Vagina (tissue), 2 donors: ENCODE measurements at regions of chr1 and their contacts with region 1.

Region 1: GRCh38 chr1:16374266-16374665 is 7.2 kb downstream of the SZRD1 start:
- DNase-seq: no peak
- H3K4me3 ChIP-seq: no peak overlapping the region
- H3K27ac ChIP-seq: no peak overlapping the region
- H3K4me1 ChIP-seq: peaks cover 97% of the 10 kb centered on the region
- H3K27me3 ChIP-seq: no peaks in the 10 kb centered on the region
- CTCF ChIP-seq: no peak
- POLR2A ChIP-seq: no peak

Region 2: GRCh38 chr1:16191916-16192546 is 182.2 kb before region 1 on chr1:
- intact Hi-C with region 1: no loop called
- DNase-seq: no peak
- H3K4me3 ChIP-seq: no peak overlapping the region
- H3K27ac ChIP-seq: no peak overlapping the region
- H3K4me1 ChIP-seq: peaks cover 42% of the 10 kb centered on the region
- H3K27me3 ChIP-seq: no peaks in the 10 kb centered on the region
- CTCF ChIP-seq: no peak
- POLR2A ChIP-seq: no peak

Region 3: GRCh38 chr1:16243936-16244649 is 130.2 kb before region 1 on chr1:
- intact Hi-C with region 1: no loop called
- DNase-seq: peak in 1 of 2 donors; percentile 87
- H3K4me3 ChIP-seq: no peak overlapping the region
- H3K27ac ChIP-seq: peak overlapping the region; percentile 69
- H3K4me1 ChIP-seq: peaks cover 34% of the 10 kb centered on the region
- H3K27me3 ChIP-seq: no peaks in the 10 kb centered on the region
- CTCF ChIP-seq: peak; percentile 73 to 91 (median 81)
- POLR2A ChIP-seq: no peak

Region 4: DNA sequence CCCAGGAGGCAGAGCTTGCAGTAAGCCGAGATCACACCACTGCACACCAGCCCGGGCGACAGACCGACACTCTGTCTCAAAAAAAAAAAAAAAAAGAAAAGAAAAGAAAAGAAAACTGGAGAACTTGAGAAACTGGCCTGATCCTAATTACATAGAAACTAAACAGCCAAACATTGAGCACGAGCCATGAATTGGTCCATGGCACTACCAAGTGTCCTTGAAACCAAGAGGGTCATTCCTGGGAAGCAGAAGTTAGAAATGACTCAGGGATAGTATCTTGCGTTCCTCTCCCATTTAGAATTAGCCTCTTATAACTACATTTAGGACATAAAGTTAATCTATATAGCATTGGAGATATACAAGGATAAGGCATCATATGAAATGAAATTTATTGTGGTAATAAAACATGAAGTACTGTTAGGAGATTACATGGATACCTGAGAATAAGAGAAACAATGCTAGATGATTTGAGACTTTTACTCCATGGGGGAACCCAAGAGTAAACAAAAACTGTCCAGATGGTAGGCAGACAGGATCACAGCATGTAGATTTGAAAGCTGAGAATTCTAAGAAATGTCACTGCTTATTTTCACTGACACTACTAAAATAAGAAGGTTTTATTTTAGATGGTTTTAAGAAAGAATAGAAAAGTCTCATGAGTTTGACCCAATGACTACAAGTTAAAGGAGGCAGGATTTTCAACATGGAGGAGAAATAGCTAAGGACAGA is 97.8 kb before region 1 on chr1:
- intact Hi-C with region 1: no loop called
- DNase-seq: no peak
- H3K4me3 ChIP-seq: no peak overlapping the region
- H3K27ac ChIP-seq: no peak overlapping the region
- H3K4me1 ChIP-seq: peaks cover 6% of the 10 kb centered on the region
- H3K27me3 ChIP-seq: no peaks in the 10 kb centered on the region
- CTCF ChIP-seq: no peak
- POLR2A ChIP-seq: no peak

Region 5: DNA sequence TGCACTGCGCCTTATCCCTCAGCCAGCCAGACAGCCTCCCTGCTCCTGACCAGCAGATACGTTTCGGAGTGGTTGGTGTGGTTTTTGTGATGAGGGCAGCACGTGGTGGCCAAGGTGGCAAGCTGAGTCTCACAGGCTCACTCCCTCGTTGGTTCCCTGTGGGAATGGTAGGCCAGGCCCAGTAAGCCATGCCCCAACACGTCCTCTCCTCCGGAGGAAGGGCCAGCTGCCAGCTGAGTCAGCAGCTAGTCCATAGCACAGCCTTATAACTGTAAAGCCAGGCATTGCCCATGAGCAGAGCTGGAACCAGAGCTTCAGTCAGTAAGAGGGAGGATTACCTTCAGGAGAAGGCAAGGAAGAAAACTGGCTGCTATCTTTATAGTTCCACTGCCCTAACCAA is 22.3 kb after region 1 on chr1:
- intact Hi-C with region 1: no loop called
- DNase-seq: no peak
- H3K4me3 ChIP-seq: no peak overlapping the region
- H3K27ac ChIP-seq: no peak overlapping the region
- H3K4me1 ChIP-seq: peaks cover 38% of the 10 kb centered on the region
- H3K27me3 ChIP-seq: no peaks in the 10 kb centered on the region
- CTCF ChIP-seq: no peak
- POLR2A ChIP-seq: no peak

Region 6: GRCh38 chr1:16409536-16410152 is 35.4 kb after region 1 on chr1:
- intact Hi-C with region 1: loop called (anchors 1 kb)
- DNase-seq: no peak
- H3K4me3 ChIP-seq: no peak overlapping the region
- H3K27ac ChIP-seq: no peak overlapping the region
- H3K4me1 ChIP-seq: no peaks in the 10 kb centered on the region
- H3K27me3 ChIP-seq: no peaks in the 10 kb centered on the region
- CTCF ChIP-seq: no peak
- POLR2A ChIP-seq: no peak